A549 (cell line): ENCODE measurements at regions of chr6 and their contacts with region 1.

Region 1: GRCh38 chr6:42217519-42218367 is at the start of gene MRPS10:
- DNase-seq: peak; percentile 85 to 95
- ATAC-seq: peak; percentile 99
- H3K4me3 ChIP-seq: peak within 1 kb of the TSS; percentile 88
- H3K27ac ChIP-seq: peak within 1 kb of the TSS; percentile 92 to 97
- H3K4me1 ChIP-seq: peaks cover 34% of the 10 kb centered on the region; the same call in 2 of the 3 replicates
- CTCF ChIP-seq: no peak
- EP300 ChIP-seq: no peak
- POLR2A ChIP-seq: peak; percentile 66
- RAD21 ChIP-seq: no peak
- polyA plus RNA-seq, gene MRPS10: 41.7 and 60.7 TPM in 2 replicates

Region 2: GRCh38 chr6:42075159-42075838 is 142.4 kb before region 1 on chr6:
- CTCF ChIA-PET with region 1: interaction called, 62 read pairs
- POLR2A ChIA-PET with region 1: no interaction called
- DNase-seq: peak; percentile 62 to 74
- ATAC-seq: peak; percentile 84 to 88
- H3K4me3 ChIP-seq: no peak overlapping the region
- H3K27ac ChIP-seq: no peak overlapping the region
- H3K4me1 ChIP-seq: no peaks in the 10 kb centered on the region
- CTCF ChIP-seq: peak; percentile 86
- EP300 ChIP-seq: no peak
- POLR2A ChIP-seq: no peak
- RAD21 ChIP-seq: peak; percentile 89 to 93

Region 3: GRCh38 chr6:42095785-42096541 is 121.8 kb before region 1 on chr6:
- CTCF ChIA-PET with region 1: interaction called, 14 read pairs
- POLR2A ChIA-PET with region 1: no interaction called
- DNase-seq: peak in 1 of 2 experiments; percentile 24
- ATAC-seq: peak in 1 of 2 experiments; percentile 17; a peak in 3 of 6 replicates
- H3K4me3 ChIP-seq: no peak overlapping the region
- H3K27ac ChIP-seq: no peak overlapping the region
- H3K4me1 ChIP-seq: peaks cover 38% of the 10 kb centered on the region
- CTCF ChIP-seq: no peak
- EP300 ChIP-seq: no peak
- POLR2A ChIP-seq: no peak
- RAD21 ChIP-seq: peak in 1 of 2 experiments; percentile 33; a peak in 2 of 5 replicates

Region 4: GRCh38 chr6:42166444-42167141 is 51.1 kb before region 1 on chr6:
- CTCF ChIA-PET with region 1: interaction called, 35 read pairs
- POLR2A ChIA-PET with region 1: interaction called, 3 read pairs
- DNase-seq: peak; percentile 72 to 81
- ATAC-seq: peak; percentile 92 to 93
- H3K4me3 ChIP-seq: no peak overlapping the region
- H3K27ac ChIP-seq: peak overlapping the region; percentile 70 to 86; a peak in 5 of 6 replicates
- H3K4me1 ChIP-seq: peaks cover 5% of the 10 kb centered on the region; the same call in 2 of the 3 replicates
- CTCF ChIP-seq: peak; percentile 85
- EP300 ChIP-seq: no peak
- POLR2A ChIP-seq: no peak
- RAD21 ChIP-seq: peak; percentile 90 to 91

Region 5: DNA sequence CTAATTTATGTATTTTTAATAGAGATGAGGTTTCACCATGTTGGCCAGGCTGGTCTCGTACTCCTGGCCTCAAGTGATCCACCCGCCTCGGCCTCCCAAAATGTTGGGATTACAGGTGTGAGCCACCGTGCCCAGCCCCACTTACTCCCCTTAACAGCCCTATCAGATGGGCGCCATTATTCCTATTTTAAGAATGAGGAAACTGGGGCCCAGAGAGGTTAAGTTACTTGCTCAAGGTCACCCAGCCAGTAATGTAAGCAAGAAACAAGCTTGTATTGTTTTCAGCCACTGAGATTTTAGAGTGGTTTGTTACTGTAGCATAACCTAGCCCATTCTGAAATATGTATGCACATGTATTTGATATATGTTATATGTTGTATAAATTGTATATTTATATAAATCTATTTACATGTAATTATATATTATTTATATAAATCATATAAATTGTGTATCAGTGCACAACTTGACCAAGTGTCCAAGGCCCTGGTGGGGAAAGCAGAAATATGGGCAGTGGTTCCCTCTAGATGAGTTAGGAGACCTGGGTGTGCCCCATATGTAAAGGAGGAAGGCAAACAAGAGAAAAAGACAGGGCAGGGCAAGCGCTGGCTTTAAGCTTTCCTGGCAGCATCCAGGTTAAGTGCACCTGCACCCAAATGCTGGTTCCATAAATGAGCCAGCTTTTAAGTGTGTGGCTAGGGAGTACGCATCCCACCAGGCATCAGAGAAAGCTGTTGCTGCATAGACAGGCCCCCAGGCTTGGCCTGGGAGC is 45.7 kb before region 1 on chr6:
- CTCF ChIA-PET with region 1: interaction called, 35 read pairs
- POLR2A ChIA-PET with region 1: interaction called, 3 read pairs
- DNase-seq: no peak
- ATAC-seq: no peak
- H3K4me3 ChIP-seq: no peak overlapping the region
- H3K27ac ChIP-seq: no peak overlapping the region
- H3K4me1 ChIP-seq: peaks cover under 1% of the 10 kb centered on the region; the same call in 2 of the 3 replicates
- CTCF ChIP-seq: no peak
- EP300 ChIP-seq: no peak
- POLR2A ChIP-seq: no peak
- RAD21 ChIP-seq: no peak

Region 6: GRCh38 chr6:42197555-42198362 is 20.0 kb before region 1 on chr6:
- CTCF ChIA-PET with region 1: interaction called, 31 read pairs
- POLR2A ChIA-PET with region 1: no interaction called
- DNase-seq: peak; percentile 62 to 68
- ATAC-seq: peak; percentile 71 to 79
- H3K4me3 ChIP-seq: no peak overlapping the region
- H3K27ac ChIP-seq: peak overlapping the region; percentile 72 to 86
- H3K4me1 ChIP-seq: peaks cover 76% of the 10 kb centered on the region
- CTCF ChIP-seq: no peak; the same call in 2 of the 3 replicates
- EP300 ChIP-seq: no peak
- POLR2A ChIP-seq: no peak
- RAD21 ChIP-seq: no peak

Region 7: GRCh38 chr6:42344756-42345155 is 127.0 kb after region 1 on chr6:
- CTCF ChIA-PET with region 1: no interaction called
- POLR2A ChIA-PET with region 1: no interaction called
- DNase-seq: no peak
- ATAC-seq: no peak
- H3K4me3 ChIP-seq: no peak overlapping the region
- H3K27ac ChIP-seq: no peak overlapping the region
- H3K4me1 ChIP-seq: peaks cover 8% of the 10 kb centered on the region
- CTCF ChIP-seq: no peak
- EP300 ChIP-seq: no peak
- POLR2A ChIP-seq: no peak
- RAD21 ChIP-seq: no peak

Region 8: DNA sequence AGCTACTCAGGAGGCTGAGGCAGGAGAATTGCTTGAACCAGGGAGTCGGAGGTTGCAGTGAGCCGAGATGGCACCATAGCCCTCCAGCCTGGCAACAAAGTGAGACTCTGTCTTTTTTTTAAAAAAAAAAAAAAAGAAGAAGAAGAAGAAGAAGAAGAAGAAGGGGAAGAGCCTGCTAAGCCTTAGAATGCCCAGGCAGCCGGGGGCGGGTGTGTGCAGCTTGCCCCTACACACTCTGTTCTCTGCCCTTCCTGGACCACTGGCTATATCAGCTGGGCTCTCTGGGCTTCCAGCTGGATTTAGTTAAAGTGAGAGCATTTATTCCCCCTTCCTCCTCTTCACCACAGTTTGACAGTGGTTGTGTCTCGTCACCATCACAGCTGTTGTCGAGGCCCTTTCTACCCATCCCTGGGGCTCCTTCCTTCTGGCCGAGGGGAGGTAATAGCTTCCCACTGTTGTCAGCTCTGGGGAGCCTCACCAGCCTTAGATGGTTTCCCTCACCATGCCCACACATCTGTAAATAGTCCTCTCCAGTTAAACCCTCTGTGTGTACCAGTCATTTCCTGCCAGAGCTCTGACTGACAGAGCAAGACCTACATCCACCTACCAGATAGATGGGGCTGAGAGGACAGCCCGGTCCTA is 156.4 kb after region 1 on chr6:
- CTCF ChIA-PET with region 1: no interaction called
- POLR2A ChIA-PET with region 1: no interaction called
- DNase-seq: no peak
- ATAC-seq: no peak
- H3K4me3 ChIP-seq: no peak overlapping the region
- H3K27ac ChIP-seq: no peak overlapping the region
- H3K4me1 ChIP-seq: peaks cover 7% of the 10 kb centered on the region; the same call in 1 of the 3 replicates
- CTCF ChIP-seq: no peak
- EP300 ChIP-seq: no peak
- POLR2A ChIP-seq: no peak
- RAD21 ChIP-seq: no peak